Caco-2 (cell line): ENCODE measurements at regions of chr18 and their contacts with region 1.

Region 1: DNA sequence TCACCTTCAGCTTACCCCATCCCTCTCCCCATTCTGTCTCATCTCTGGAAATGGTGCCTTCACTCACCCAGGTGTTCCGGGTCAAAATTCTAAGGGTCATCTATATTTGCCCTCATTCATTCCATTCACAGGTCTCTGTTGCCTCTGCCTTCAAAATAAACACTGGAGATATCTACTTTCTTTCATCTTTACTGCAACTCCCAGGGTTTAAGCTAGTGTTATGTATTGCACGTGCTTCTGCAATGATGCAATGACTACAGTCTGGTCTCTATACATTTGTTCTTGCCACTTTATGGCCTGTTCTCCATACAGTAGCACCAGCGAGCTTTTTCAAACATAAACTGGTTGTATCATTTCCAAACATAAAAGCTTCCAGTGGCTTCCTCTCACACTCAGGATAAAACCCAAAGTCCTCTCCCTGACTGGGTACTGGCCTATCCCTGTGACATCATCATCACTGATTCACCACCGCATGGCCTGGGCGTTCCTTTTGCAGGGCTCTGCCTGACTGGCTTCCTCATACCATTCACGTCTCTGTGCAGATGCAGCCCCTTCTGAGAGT is 14.3 kb downstream of the DSG2 start:
- DNase-seq: peak; percentile 78 to 85
- H3K4me3 ChIP-seq: no peak overlapping the region
- H3K4me3 Mint-ChIP-seq: peak overlapping the region; percentile 58
- H3K27ac Mint-ChIP-seq: peak overlapping the region; percentile 44
- H3K4me1 ChIP-seq: peaks cover 44% of the 10 kb centered on the region
- H3K4me1 Mint-ChIP-seq: peaks cover 20% of the 10 kb centered on the region
- H3K27me3 ChIP-seq: no peaks in the 10 kb centered on the region
- H3K27me3 Mint-ChIP-seq: no peaks in the 10 kb centered on the region
- CTCF ChIP-seq: no peak

Region 2: GRCh38 chr18:31261792-31262582 is 250.3 kb before region 1 on chr18:
- CTCF ChIA-PET with region 1: no interaction called
- POLR2A ChIA-PET with region 1: no interaction called
- intact Hi-C with region 1: loop called (anchors 5 kb)
- DNase-seq: peak in 1 of 2 experiments; percentile 56
- H3K4me3 ChIP-seq: no peak overlapping the region
- H3K4me3 Mint-ChIP-seq: no peak overlapping the region
- H3K27ac Mint-ChIP-seq: peak overlapping the region; percentile 84
- H3K4me1 ChIP-seq: peaks cover 21% of the 10 kb centered on the region
- H3K4me1 Mint-ChIP-seq: peaks cover 5% of the 10 kb centered on the region
- H3K27me3 ChIP-seq: no peaks in the 10 kb centered on the region
- H3K27me3 Mint-ChIP-seq: no peaks in the 10 kb centered on the region
- CTCF ChIP-seq: no peak

Region 3: GRCh38 chr18:31424383-31424988 is 87.8 kb before region 1 on chr18:
- CTCF ChIA-PET with region 1: interaction called, 5 read pairs
- POLR2A ChIA-PET with region 1: no interaction called
- intact Hi-C with region 1: loop called (anchors 2 kb)
- DNase-seq: peak; percentile 21 to 31
- H3K4me3 ChIP-seq: no peak overlapping the region
- H3K4me3 Mint-ChIP-seq: no peak overlapping the region
- H3K27ac Mint-ChIP-seq: no peak overlapping the region
- H3K4me1 ChIP-seq: peaks cover 10% of the 10 kb centered on the region; the same call in 1 of the 2 replicates
- H3K4me1 Mint-ChIP-seq: peaks cover 11% of the 10 kb centered on the region
- H3K27me3 ChIP-seq: no peaks in the 10 kb centered on the region
- H3K27me3 Mint-ChIP-seq: no peaks in the 10 kb centered on the region
- CTCF ChIP-seq: peak; percentile 53

Region 4: GRCh38 chr18:31497837-31498573 is 14.3 kb before region 1 on chr18 and contains the start of gene DSG2:
- CTCF ChIA-PET with region 1: no interaction called
- POLR2A ChIA-PET with region 1: no interaction called
- intact Hi-C with region 1: loop called (anchors 2 kb)
- DNase-seq: peak; percentile 66 to 75
- H3K4me3 ChIP-seq: peak within 1 kb of the TSS; percentile 72
- H3K4me3 Mint-ChIP-seq: peak within 1 kb of the TSS; percentile 79
- H3K27ac Mint-ChIP-seq: peak within 1 kb of the TSS; percentile 61
- H3K4me1 ChIP-seq: peaks cover 5% of the 10 kb centered on the region; the same call in 1 of the 2 replicates
- H3K4me1 Mint-ChIP-seq: peaks cover 6% of the 10 kb centered on the region
- H3K27me3 ChIP-seq: no peaks in the 10 kb centered on the region
- H3K27me3 Mint-ChIP-seq: no peaks in the 10 kb centered on the region
- CTCF ChIP-seq: no peak
- total RNA-seq, gene DSG2: 32.1 and 33.6 TPM in 2 replicates

Region 5: DNA sequence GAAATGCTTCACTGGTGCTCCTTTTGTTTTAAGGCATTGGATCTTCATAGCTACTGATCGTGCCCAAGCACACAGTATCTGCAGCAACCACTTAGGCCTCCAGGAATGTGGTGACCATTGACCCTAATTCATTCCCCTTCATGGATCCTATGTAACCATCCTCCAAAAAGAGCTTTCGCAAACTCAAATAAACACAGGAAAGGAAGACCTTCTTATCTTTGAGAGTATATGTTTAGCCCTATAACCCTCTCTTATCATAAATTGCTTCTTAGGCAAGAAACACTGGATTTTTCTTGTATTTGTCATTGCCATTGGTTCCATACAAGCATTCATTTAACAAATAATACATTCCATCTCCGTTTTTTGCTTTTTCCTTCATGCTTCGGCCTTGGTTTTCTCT is 75.2 kb after region 1 on chr18:
- CTCF ChIA-PET with region 1: no interaction called
- POLR2A ChIA-PET with region 1: interaction called, 3 read pairs
- intact Hi-C with region 1: loop called (anchors 2 kb)
- DNase-seq: peak; percentile 66 to 73
- H3K4me3 ChIP-seq: no peak overlapping the region
- H3K4me3 Mint-ChIP-seq: peak overlapping the region; percentile 49
- H3K27ac Mint-ChIP-seq: peak overlapping the region; percentile 79
- H3K4me1 ChIP-seq: peaks cover 51% of the 10 kb centered on the region
- H3K4me1 Mint-ChIP-seq: peaks cover 27% of the 10 kb centered on the region
- H3K27me3 ChIP-seq: no peaks in the 10 kb centered on the region
- H3K27me3 Mint-ChIP-seq: no peaks in the 10 kb centered on the region
- CTCF ChIP-seq: no peak